ENCODE measurements at regions of chr1 and their contacts with region 1.

Region 1: DNA sequence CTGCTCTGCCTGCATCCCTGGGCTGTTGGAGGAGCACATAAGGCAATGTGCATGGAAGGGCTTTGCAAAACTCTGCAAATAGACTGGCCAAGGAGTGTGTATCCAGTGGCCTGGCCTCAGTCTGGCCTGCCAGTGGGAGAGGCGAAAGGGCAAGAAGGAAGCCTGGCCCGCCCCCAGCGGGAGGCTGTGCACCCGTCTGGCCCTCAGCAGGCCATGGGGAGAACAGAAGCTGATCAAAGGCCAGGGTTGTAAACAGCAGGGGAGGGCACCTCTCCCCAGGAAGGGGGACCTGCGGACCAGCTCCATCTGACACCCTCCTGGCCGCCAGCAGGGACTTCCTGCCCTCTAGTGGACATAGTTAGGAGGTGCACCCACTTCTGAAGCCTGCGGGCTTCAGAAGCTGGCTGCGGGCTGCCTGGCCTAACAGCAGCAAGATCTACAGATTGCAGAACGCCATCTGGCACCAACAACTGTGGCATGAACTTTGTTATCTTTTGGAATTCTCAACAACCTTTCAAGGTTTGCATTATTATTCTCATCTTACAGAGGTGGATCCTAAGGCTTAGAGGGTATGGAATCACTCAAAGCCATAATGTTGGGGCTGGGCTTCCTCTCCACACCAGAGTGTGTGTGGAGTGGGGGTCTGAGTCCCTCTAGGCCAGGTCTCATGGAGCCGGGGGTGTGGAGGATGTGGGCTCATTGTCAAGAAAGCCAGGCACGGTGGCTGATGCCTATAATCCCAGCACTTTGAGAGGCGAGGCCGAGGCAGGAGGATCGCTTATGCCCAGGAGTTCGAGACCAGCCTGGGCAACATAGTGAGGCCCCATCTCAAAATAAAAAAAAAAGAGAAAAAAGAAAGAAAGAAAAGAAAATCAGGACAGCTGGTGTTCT is 18.9 kb upstream of the CDK18 start:
- DNase-seq: peak; percentile 48
- ATAC-seq: peak; percentile 80 to 83

Region 2: DNA sequence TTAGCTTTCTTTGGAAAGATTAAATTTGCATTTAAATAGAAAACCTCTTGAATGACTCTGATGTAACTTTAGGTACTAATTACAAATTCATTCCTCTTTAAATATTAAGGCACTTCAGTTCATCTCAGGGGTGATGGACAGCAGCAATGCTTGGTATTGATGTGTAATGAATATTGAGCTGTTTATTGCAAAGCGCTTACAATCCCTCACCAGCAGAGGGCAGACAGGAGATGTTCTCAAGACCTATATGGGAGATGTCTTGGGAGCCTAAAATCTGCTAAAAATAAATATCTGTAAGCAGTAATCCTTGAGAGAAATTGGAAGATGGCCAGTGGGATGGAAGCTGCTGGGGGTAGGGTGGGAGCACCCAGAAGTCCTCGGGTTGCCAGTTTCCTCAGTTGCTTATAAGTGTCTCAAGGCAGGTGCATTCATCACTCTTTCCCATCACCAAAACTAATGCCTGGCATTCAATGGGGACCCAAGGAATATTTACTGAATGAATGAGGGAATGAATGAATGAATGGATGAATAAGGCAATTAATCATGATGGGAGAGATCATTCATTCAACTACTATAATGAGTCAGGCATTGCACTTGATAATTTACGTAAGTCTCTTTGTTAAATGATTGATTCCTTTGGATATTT is 131.2 kb before region 1 on chr1:
- intact Hi-C with region 1: loop called in 1 of 2 experiments (anchors 2 kb)
- DNase-seq: peak; percentile 45
- ATAC-seq: peak in 1 of 2 donors; percentile 62

Region 3: DNA sequence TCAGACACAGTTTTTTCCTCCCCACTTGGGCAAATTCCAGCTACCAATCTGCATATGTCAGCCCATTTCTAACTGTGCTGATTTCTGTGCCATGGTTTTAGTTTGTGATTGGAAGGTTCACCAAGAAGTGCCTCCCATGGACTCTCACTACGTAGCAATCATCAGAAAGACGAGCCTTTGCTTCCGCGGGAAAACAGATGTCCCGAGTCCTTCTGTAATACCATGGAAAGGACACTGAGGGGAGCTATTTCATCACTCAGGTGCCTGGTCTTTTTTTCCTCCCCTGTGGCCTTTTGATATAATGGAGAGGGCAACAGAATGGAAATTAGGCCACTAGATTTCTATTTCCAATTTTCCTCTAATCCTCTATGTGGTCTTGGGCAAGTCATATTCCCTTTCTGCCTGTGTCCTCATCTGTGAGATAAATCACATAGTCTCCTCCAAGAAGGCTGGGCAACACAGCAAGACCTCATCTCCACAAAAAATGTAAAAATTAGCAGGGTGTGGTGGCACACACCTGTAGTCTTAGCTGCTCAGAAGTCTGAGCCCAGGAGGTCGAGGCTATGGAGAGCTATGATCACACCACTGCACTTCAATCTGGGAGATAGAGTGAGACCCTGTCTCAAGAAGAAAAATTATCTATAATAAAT is 88.5 kb before region 1 on chr1:
- intact Hi-C with region 1: loop called (anchors 1 to 5 kb)
- DNase-seq: no peak
- ATAC-seq: peak; percentile 57 to 61

Region 4: DNA sequence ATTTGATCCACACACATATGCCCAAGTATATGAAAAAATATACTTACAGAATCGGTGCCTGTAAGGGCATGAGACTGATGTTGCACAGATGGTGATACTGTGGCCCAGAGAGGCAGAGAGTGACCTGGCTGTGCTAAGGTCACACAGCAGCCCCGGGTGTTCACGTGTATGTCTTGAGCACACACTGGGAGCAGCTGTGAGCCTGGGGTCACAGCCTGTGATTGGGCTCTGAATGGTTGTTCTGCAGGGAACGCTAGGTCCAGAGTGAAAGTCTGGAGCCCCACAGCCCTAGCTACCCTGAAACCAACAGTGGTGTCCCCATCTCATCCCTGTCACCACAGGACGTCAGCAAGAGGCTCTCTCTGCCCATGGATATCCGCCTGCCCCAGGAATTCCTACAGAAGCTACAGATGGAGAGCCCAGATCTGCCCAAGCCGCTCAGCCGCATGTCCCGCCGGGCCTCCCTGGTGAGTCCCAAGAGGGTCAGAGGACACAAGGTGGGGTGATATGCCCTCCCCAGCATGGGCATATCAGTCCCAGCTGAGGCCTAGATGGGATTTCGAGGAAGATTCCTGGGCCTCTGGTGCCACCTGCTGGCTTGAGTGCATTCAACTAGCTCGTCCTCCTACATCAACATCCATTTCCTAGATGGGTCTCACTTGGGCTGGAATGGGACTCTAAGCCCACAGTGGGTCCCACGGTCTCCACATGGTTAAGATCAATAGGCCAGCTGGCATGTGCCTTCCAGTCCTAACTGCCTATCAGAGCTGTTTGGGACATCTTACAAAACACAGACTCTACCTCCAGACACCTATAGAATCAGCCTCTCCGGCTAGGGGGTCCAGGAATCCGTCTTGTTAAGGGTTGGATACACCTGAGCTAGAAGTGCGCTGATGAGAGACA is 38.6 kb after region 1 on chr1:
- intact Hi-C with region 1: loop called (anchors 1 to 5 kb)
- DNase-seq: peak; percentile 81
- ATAC-seq: peak; percentile 50 to 69

Region 5: GRCh38 chr1:205616563-205617293 is 131.1 kb after region 1 on chr1:
- intact Hi-C with region 1: no loop called
- DNase-seq: no peak
- ATAC-seq: no peak